Activated CD4-positive, alpha-beta T cell treated with anti-CD3 and anti-CD28 coated beads, Interleukin-2, amount 10 ng/mL, durations not matched to agents 24 days and 14 days (primary cell): ENCODE measurements at regions of chr12 and their contacts with region 1.

Region 1: DNA sequence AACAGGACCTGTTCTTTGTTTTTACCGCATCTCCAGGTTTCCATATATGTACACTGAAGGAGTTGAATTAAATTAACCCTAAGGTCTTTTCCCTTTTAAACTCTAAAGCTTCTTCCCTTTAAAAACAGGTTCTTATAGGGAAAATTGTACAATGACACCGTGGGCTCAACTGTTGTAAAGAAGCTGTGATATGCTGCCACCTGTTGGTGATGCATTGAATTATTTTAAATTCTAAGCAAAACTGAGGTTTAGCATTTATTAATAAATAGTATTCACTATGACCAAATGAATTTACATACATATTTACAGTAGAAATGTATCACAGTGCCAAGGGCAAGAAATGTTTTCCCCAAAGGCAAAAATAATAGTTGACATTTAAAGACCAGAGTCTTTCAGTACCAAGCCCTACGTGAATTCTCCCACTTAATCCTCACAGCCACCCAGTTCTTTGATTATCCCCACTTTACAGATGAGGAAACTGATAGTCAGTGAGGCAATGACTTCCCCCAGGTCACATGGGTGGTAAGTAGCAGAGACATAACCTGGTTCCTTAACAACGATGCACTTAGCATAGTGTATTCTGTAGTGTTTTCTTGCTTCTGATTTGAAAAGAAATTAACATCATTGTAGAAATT is 35.7 kb upstream of the TMEM263 start:
- DNase-seq: peak; percentile 74
- H3K4me3 Mint-ChIP-seq: no peak overlapping the region
- H3K27ac Mint-ChIP-seq: no peak overlapping the region
- H3K4me1 Mint-ChIP-seq: peaks cover 11% of the 10 kb centered on the region
- H3K27me3 Mint-ChIP-seq: peaks cover 23% of the 10 kb centered on the region

Region 2: GRCh38 chr12:106223485-106224354 is 696.3 kb before region 1 on chr12:
- intact Hi-C with region 1: loop called (anchors 5 kb)
- DNase-seq: peak; percentile 93
- H3K4me3 Mint-ChIP-seq: no peak overlapping the region
- H3K27ac Mint-ChIP-seq: no peak overlapping the region
- H3K4me1 Mint-ChIP-seq: peaks cover 20% of the 10 kb centered on the region
- H3K27me3 Mint-ChIP-seq: peaks cover 11% of the 10 kb centered on the region

Region 3: DNA sequence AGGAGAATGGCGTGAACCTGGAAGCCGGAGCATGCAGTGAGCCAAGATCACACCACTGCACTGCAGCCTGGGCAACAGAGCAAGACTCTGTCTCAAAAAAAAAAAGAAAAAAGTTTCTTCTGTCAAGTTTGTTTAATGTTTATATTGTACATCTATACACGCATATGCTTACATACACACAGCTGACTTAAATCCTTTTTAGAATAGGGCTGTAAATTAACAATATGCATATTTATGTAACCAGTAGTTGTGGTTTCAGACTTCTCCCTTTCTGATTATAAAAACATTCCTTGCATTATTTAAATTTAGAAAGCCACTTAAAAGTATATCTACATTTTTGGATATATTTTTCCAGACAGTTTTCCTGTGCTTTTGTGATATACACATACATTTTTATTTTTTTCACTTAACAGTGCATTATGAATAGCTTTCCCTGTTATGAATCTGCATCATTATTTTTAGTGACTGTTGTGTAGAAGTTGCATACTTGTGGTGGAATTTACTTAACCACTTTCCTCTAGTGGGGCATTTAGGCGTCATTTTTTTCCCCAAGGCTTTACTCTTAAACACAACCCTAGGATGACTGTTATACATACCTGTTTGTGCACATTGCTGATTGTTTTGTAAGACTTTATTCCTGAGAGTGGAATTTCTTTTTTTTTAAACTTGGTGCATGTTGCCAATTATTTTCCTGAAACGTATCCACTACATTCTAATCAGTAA is 533.1 kb before region 1 on chr12:
- intact Hi-C with region 1: loop called (anchors 1 kb)
- DNase-seq: no peak
- H3K4me3 Mint-ChIP-seq: no peak overlapping the region
- H3K27ac Mint-ChIP-seq: no peak overlapping the region
- H3K4me1 Mint-ChIP-seq: peaks cover 7% of the 10 kb centered on the region
- H3K27me3 Mint-ChIP-seq: no peaks in the 10 kb centered on the region

Region 4: GRCh38 chr12:106682592-106683234 is 237.3 kb before region 1 on chr12:
- intact Hi-C with region 1: loop called (anchors 2 kb)
- DNase-seq: no peak
- H3K4me3 Mint-ChIP-seq: no peak overlapping the region
- H3K27ac Mint-ChIP-seq: no peak overlapping the region
- H3K4me1 Mint-ChIP-seq: no peaks in the 10 kb centered on the region
- H3K27me3 Mint-ChIP-seq: peaks cover 4% of the 10 kb centered on the region

Region 5: DNA sequence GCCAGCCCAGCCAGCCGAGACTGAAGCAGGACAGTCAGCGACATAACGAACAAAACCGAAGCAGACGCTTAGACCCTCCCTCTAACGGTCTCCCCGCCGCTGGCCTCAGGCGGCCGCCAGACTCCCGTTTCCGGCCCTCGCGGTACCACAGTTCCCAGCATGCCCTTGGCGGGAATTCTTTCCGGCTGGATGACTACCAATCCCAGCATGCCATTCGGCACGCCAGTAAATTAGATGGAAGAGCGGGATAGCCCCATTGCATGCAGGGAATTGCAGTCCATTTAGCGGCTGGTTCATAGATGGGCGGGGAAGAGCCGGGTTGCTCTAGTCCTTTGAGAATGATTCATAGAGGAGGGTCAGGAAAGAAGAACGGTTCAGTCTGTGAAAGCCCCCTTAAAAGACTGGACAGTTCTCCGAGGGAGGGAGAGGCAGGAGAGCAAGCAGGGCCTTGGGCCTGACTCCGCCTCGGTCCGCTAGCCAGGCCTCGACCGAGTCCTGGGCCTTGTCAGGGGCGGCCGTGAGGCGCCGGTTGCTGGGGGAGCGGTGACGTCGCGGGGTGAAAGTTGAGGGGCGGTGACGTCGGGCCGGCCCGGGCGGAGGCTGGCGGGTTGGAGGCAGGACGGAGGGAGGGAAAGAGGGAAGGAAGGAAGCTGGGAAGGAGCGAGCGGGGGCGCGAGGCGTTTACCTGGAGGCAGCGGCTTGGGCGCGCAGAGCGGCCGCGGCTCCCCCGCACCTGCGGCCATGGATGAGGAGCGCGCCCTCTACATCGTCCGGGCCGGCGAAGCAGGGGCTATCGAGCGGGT is 145.8 kb before region 1 on chr12 and contains the start of gene RIC8B:
- intact Hi-C with region 1: loop called (anchors 10 kb)
- DNase-seq: peak; percentile 95
- H3K4me3 Mint-ChIP-seq: peak within 1 kb of the TSS; percentile 98
- H3K27ac Mint-ChIP-seq: peak within 1 kb of the TSS; percentile 96
- H3K4me1 Mint-ChIP-seq: peaks cover 32% of the 10 kb centered on the region
- H3K27me3 Mint-ChIP-seq: peaks cover 2% of the 10 kb centered on the region
- total RNA-seq, gene RIC8B: 13.6 and 14.9 TPM in 2 replicates

Region 6: DNA sequence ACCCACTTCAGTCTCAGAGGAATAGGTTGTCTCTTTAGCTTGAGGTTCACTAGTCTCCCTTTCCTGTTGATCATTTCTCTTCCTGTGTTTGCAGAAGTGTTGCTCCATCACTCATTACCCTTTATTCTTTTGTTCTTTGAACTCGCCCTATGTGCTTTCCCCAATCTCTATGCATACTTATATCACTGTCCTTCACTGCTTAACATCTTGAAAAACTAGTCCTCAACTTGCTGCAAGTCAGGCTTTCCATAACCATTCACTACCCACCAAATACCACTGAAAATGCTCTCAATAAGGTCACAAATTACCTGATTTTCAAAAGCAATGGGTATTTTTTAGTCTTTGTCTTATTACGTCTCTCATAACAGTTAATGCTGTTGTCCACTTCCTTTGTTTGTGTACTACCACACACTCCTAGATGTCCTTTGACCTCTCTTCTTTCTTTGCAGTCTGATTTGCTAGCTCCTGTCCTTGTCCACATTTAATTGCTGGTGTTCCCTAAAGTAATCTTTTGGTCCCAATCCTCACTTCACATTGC is 64.7 kb before region 1 on chr12:
- intact Hi-C with region 1: loop called (anchors 5 kb)
- DNase-seq: peak; percentile 58
- H3K4me3 Mint-ChIP-seq: no peak overlapping the region
- H3K27ac Mint-ChIP-seq: no peak overlapping the region
- H3K4me1 Mint-ChIP-seq: peaks cover 8% of the 10 kb centered on the region
- H3K27me3 Mint-ChIP-seq: no peaks in the 10 kb centered on the region

Region 7: DNA sequence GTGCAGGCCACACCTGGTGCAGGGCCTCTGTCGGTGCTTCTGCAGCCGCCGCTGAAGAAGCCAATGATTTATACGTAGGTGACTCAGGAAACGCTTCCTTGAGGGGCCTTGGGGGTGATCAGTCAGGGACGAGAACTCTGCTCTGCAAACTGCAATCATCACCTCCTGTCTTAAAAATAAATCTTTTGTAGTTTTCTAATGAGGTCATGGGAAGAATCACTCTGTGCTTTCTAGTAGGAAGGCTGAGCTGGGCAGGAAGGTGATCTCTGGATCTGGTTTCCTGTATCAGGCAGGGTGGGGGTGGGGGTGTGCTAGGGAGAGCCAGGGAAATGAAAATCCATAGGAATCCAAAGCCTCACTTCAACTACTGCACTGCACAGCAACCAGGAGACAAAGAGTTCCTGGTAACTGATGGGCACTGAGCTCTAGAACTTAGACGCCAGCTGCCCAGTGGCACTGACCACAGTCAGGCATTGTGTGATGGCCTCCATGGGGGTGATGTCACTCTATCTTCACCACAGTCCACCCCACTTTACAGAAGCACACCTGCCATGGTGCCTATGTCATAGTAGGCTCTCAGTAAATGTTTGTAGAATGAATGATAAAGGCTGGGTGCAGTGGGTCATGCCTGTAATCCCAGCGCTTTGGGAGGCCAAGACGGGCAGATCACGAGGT is 473.2 kb after region 1 on chr12:
- intact Hi-C with region 1: no loop called
- DNase-seq: no peak
- H3K4me3 Mint-ChIP-seq: no peak overlapping the region
- H3K27ac Mint-ChIP-seq: no peak overlapping the region
- H3K4me1 Mint-ChIP-seq: peaks cover 59% of the 10 kb centered on the region
- H3K27me3 Mint-ChIP-seq: no peaks in the 10 kb centered on the region